AG04450 (cell line): ENCODE measurements at regions of chr4 and their contacts with region 1.

Region 1: DNA sequence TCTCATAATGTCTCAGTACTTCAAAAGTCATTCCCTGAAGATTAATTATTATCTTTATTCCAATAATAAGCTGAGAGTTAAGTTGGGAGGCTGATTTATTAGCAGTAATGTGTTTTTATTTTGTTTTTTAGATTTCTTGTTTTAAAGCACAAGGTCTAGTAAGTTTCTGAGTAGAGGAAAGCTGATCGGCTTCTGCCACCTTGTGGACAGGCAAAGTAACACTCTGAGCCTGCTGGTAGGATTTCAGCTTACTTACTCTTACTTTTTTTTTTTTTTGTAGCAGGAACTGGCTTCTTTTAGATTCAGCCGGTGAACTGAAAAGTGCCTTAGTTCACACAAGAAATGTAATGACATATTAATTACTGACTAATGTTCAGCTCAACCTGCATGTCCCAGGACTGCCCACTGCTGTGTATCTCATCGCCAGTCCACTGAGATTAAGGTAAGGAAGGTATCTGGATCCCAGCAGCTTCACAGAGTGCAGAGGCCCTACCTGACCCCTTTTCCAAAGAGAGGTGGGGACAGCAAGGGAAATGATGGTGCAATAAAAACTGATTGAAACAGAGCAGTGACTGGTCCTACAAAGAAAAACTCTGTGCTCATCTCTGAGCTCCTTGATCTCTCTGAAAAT is 126.5 kb downstream of the ADGRA3 start:
- DNase-seq: peak; percentile 72
- H3K4me3 ChIP-seq: no peak overlapping the region
- H3K27ac ChIP-seq: no peak overlapping the region
- H3K27me3 ChIP-seq: no peaks in the 10 kb centered on the region
- CTCF ChIP-seq: peak; percentile 91

Region 2: DNA sequence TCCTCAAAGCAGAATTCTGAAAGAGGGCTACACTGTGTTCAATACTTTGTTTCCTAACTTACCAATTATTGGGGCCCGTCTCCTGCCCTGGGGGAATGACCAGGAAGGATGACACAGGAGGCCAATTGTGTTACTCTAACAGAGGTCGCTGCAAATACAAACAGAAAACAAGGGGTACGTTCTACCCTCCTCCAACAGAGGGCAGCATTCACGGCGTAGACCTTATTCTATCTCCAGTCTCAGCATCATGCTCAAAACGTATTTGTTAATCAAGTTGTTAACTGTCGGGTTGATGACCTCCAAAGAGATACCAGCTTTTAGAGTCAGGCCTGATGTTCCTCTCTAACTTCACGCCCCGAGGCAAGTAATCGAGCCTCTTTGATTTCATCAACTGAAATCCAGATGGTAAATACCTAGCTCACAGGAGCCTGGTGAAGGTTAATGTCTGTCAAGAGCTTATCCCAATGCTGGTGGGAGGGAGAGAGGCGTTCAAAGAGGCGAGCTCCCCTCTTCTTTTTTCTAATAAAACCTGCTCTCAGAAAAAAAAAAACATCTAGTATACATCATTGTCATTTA is 259.8 kb before region 1 on chr4:
- CTCF ChIA-PET with region 1: interaction called, 43 read pairs
- POLR2A ChIA-PET with region 1: no interaction called
- DNase-seq: no peak
- H3K4me3 ChIP-seq: no peak overlapping the region
- H3K27ac ChIP-seq: no peak overlapping the region
- H3K27me3 ChIP-seq: no peaks in the 10 kb centered on the region
- CTCF ChIP-seq: peak; percentile 65

Region 3: GRCh38 chr4:22202246-22202974 is 186.9 kb before region 1 on chr4:
- CTCF ChIA-PET with region 1: no interaction called
- POLR2A ChIA-PET with region 1: no interaction called
- DNase-seq: no peak
- H3K4me3 ChIP-seq: no peak overlapping the region
- H3K27ac ChIP-seq: no peak overlapping the region
- H3K27me3 ChIP-seq: no peaks in the 10 kb centered on the region
- CTCF ChIP-seq: no peak

Region 4: GRCh38 chr4:22356987-22357596 is 32.3 kb before region 1 on chr4:
- CTCF ChIA-PET with region 1: interaction called, 11 read pairs
- POLR2A ChIA-PET with region 1: no interaction called
- DNase-seq: no peak
- H3K4me3 ChIP-seq: no peak overlapping the region
- H3K27ac ChIP-seq: no peak overlapping the region
- H3K27me3 ChIP-seq: no peaks in the 10 kb centered on the region
- CTCF ChIP-seq: peak; percentile 45

Region 5: GRCh38 chr4:22369901-22370562 is 19.3 kb before region 1 on chr4:
- CTCF ChIA-PET with region 1: interaction called, 27 read pairs
- POLR2A ChIA-PET with region 1: no interaction called
- DNase-seq: no peak
- H3K4me3 ChIP-seq: no peak overlapping the region
- H3K27ac ChIP-seq: no peak overlapping the region
- H3K27me3 ChIP-seq: no peaks in the 10 kb centered on the region
- CTCF ChIP-seq: no peak

Region 6: GRCh38 chr4:22434895-22435294 is 45.5 kb after region 1 on chr4:
- CTCF ChIA-PET with region 1: interaction called, 11 read pairs
- POLR2A ChIA-PET with region 1: no interaction called
- DNase-seq: peak; percentile 34
- H3K4me3 ChIP-seq: no peak overlapping the region
- H3K27ac ChIP-seq: no peak overlapping the region
- H3K27me3 ChIP-seq: no peaks in the 10 kb centered on the region
- CTCF ChIP-seq: peak; percentile 71